ENCODE measurements at regions of chr1 and their contacts with region 1.

Region 1: DNA sequence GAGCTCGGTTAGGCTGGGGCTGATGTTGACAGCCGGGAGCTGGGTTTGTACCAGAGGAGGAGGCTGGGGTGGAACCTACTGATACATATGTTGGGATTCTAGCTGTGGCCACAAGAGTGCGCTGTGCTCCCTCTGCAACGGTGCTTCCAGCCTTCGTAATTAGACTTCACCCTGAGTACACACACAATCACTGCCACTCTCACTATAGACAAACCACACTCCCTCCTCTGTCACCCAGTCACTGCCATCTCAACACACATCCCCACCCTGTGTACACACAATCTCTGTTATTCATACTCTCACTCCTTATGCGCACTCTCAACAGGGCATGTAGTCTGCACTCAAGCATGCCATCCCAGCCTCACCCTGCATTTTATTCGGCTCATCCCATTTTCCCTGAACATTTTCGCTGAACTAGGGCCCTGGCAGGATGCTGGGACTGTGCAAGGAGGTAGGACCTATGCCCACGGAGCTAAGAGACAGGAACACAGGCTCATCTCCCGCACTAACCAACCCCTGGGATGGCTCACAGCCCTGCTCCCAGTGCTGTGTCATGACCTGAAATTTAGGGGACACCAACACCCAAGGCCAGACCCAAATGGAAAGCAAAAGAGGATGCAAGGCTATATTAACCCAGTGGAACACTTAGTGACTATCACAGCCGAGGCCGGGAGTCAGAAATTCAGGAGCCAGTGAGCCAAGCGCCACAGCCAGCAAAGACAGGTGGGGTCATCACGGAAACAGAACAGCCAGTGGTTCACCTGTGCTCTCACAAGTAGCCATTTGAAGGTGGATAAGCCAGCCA is 5.7 kb downstream of the GJB3 start:
- DNase-seq: peak; percentile 66 to 79 (median 73)
- ATAC-seq: peak; percentile 50 to 82 (median 78)
- H3K4me3 ChIP-seq: no peak overlapping the region
- H3K27ac ChIP-seq: no peak overlapping the region
- H3K4me1 ChIP-seq: peaks cover 0 to 34% (median 6%) of the 10 kb centered on the region in 12 donors
- H3K27me3 ChIP-seq: peaks cover 6 to 22% (median 10%) of the 10 kb centered on the region in 9 donors
- CTCF ChIP-seq: peak; percentile 80 to 93 (median 86)
- POLR2A ChIP-seq: no peak

Region 2: DNA sequence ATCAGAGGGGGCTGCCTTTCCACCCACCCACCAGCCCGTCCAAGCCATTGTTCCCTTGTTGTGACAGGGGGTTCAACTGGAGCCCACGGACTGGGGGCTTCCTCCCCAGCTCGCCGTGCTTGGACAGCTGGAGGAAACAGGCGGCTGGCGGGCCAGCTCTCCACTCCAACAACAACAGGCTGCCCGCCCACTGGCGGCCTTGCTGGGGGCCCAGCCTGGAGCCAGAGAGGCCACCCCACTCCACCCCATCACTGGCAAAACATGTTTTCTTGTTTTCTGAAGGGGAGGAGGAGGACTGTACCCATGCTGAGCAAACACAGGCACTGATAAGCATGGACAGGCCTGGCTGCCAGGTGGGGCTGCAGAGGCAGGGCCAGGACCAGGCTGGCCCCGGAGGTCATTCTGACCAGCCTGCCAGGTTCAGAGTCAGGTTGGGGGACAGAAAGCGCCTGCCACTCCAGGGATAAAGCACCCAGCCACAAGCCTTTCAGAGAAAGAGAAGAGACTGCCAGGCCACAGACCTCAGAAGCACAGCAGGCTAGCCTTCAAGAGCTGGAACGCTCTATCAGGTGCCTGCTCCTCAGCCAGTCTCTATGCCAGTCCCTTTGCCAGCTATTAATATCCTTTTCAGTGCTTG is 38.9 kb after region 1 on chr1:
- intact Hi-C with region 1: no loop called
- DNase-seq: peak in 3 of 5 donors; percentile 31 to 42 (median 38)
- ATAC-seq: peak; percentile 83 to 88 (median 86)
- H3K4me3 ChIP-seq: no peak overlapping the region
- H3K27ac ChIP-seq: peak overlapping the region in 9 of 12 donors; percentile 26 to 76 (median 64)
- H3K4me1 ChIP-seq: peaks cover 0 to 50% (median 18%) of the 10 kb centered on the region in 12 donors
- H3K27me3 ChIP-seq: no peaks in the 10 kb centered on the region
- CTCF ChIP-seq: peak in 1 of 12 donors; percentile 7
- POLR2A ChIP-seq: no peak

Region 3: DNA sequence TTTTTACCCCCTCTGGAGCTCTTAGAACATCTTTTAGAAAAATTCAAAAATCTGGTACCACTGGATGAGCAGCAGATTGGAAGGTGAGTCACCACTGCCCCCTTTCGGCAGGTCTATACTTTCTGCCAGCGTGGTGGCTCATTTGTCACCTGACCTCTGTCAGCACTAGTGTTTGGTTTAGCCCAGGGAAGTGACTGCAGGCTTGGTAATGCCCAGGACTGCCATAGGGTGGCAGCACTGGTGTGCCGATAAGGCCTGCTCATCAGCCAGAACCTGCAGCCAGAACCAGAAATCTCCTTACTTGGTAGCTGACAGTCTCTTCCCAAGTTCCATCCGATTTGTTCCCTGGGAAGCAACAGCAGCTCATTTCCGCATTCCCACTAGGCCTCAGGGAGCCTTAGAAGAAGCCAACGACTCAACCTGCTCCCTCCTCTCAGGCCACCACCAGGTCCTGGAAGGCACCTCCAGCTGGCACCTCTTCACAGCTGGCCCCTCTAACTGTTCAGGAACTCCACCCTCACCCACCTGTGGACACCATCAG is 66.0 kb after region 1 on chr1:
- intact Hi-C with region 1: loop called in 9 of 10 experiments (anchors 1 to 2 kb)
- DNase-seq: peak; percentile 86 to 90 (median 88)
- ATAC-seq: peak; percentile 83 to 95 (median 94)
- H3K4me3 ChIP-seq: no peak overlapping the region
- H3K27ac ChIP-seq: peak overlapping the region in 10 of 12 donors; percentile 1 to 77 (median 56)
- H3K4me1 ChIP-seq: peaks cover 0 to 57% (median 32%) of the 10 kb centered on the region in 12 donors
- H3K27me3 ChIP-seq: no peaks in the 10 kb centered on the region
- CTCF ChIP-seq: peak; percentile 92 to 98 (median 97)
- POLR2A ChIP-seq: peak in 1 of 2 donors; percentile 12

Region 4: DNA sequence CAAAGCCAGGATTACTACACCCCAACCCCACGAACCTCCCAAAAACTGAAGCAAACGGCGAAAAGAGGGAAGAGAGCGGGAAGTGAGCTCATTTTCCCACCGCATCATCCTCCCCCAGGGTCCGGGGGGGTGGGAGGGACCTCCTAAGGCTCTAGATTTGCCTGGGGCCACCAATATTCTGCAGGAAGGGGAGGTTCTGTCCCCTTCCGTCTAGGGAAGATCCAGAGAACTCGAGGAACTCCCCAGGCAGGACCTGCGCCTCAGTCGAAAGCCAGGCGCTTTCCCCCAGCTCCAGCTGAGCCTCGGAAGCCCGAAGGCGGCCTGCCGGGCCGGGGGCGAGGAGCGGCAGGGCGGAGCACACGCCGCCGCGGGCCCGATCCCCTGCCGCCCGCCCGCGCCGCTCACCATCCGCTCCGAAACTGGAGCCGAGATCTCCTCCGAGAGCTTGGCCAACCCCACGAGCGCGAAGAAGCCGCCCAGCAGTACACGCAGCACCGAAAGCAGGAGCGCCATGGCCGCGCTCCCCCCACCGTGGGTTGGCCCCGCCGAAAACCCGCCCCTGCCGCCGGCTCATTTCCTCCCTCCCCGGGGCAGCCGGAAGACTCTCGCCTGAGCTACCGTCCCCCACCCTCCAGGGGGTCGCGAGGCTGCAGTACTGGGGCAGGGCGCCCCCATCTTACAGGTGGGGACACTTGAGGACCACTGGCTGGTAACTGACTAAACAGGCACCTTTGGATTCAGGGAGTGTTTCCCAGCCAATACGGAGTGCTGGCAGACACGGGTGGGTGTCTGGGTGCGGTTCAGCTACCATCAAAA is 198.3 kb after region 1 on chr1 and contains the start of gene TMEM35B:
- intact Hi-C with region 1: loop called in 1 of 10 experiments (anchors 5 kb)
- DNase-seq: peak; percentile 75 to 90 (median 80)
- ATAC-seq: peak; percentile 68 to 95 (median 92)
- H3K4me3 ChIP-seq: peak within 1 kb of the TSS; percentile 52 to 99 (median 80)
- H3K27ac ChIP-seq: peak within 1 kb of the TSS; percentile 72 to 98 (median 92)
- H3K4me1 ChIP-seq: peaks cover 0 to 29% (median 18%) of the 10 kb centered on the region in 12 donors
- H3K27me3 ChIP-seq: no peaks in the 10 kb centered on the region
- CTCF ChIP-seq: peak in 2 of 12 donors; percentile 11 to 12
- POLR2A ChIP-seq: peak in 1 of 2 donors; percentile 72
- total RNA-seq, gene TMEM35B: 4.0 to 19.9 (median 8.6) TPM

Measured in heart left ventricle (tissue), 16 donors.